Activated T-helper 1 cell treated with anti-CD3 and anti-CD28 coated beads, Interleukin-12 subunit alpha, Interleukin-12 subunit beta, Interleukin-2, Interleukin-4 antibody, amounts not matched to agents 30 ng/mL and 10 ng/mL and 1 ng/mL, durations not matched to agents 14 hours and 24 hours and 36 hours (primary cell): ENCODE measurements at regions of chr2 and their contacts with region 1.

Region 1: DNA sequence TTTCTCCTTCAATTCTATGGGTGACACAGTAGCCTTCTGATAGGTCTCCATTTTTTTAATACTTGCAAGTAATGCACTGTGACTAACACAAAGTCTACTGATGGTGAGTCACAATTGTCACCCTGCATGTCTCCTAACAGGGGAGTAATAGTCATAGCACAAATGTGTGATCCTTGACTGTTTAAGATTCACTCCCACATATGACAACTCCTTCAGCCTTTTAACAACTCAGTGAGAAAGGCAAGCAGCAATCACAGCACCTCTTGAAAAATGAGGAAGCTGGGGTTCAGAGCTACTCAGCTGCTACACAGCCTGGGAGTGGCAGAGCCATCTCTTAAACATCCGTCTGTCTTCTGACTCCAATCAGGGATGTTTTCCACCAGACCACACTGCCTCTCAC is 63.8 kb downstream of the EHD3 start:
- DNase-seq: no peak
- H3K4me3 Mint-ChIP-seq: no peak overlapping the region
- H3K27ac Mint-ChIP-seq: no peak overlapping the region
- H3K4me1 Mint-ChIP-seq: peaks cover 6% of the 10 kb centered on the region
- H3K27me3 Mint-ChIP-seq: peaks cover 14% of the 10 kb centered on the region

Region 2: GRCh38 chr2:31324000-31324633 is 26.4 kb after region 1 on chr2:
- intact Hi-C with region 1: loop called (anchors 2 kb)
- DNase-seq: no peak
- H3K4me3 Mint-ChIP-seq: peak overlapping the region; percentile 56
- H3K27ac Mint-ChIP-seq: peak overlapping the region; percentile 66
- H3K4me1 Mint-ChIP-seq: peaks cover 52% of the 10 kb centered on the region
- H3K27me3 Mint-ChIP-seq: peaks cover 6% of the 10 kb centered on the region

Region 3: GRCh38 chr2:31909661-31910060 is 611.9 kb after region 1 on chr2:
- intact Hi-C with region 1: no loop called
- DNase-seq: no peak
- H3K4me3 Mint-ChIP-seq: no peak overlapping the region
- H3K27ac Mint-ChIP-seq: no peak overlapping the region
- H3K4me1 Mint-ChIP-seq: peaks cover 10% of the 10 kb centered on the region
- H3K27me3 Mint-ChIP-seq: no peaks in the 10 kb centered on the region